Common myeloid progenitor, CD34-positive (primary cell): ENCODE measurements at regions of chr17 and their contacts with region 1.

Region 1: DNA sequence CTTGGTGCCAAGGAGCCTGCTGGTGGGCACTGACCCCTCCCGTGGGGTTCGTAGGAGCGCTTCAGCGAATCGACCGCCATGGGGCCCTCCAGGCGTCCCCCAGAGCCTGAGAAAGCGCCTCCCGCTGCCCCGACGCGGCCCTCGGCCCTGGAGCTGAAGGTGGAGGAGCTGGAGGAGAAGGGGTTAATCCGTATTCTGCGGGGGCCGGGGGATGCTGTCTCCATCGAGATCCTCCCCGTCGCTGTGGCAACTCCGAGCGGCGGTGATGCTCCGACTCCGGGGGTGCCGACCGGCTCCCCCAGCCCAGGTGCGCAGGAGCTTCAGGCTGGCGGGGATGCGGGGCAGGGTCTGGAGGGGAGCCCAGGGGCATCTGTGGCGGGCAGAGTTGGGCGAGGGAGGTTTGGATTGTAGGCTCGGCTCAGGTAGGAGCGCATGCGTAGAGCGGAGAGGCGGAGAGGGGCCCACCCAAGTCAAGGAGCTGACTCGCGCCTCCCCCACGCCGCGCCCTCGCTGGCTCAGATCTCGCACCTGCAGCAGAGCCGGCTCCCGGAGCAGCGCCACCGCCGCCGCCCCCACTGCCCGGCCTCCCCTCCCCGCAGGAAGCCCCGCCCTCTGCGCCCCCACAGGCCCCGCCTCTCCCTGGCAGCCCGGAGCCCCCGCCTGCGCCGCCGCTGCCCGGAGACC is 19.8 kb downstream of the FMNL1 start:
- DNase-seq: no peak
- H3K4me3 ChIP-seq: no peak overlapping the region
- H3K27ac ChIP-seq: no peak overlapping the region
- H3K4me1 ChIP-seq: peaks cover 0 to 7% (median 4%) of the 10 kb centered on the region in 4 experiments
- H3K27me3 ChIP-seq: no peaks in the 10 kb centered on the region

Region 2: GRCh38 chr17:45123930-45124796 is 117.3 kb before region 1 on chr17:
- CTCF ChIA-PET with region 1: no interaction called
- POLR2A ChIA-PET with region 1: no interaction called
- DNase-seq: peak; percentile 61 to 91 (median 86)
- H3K4me3 ChIP-seq: no peak overlapping the region
- H3K27ac ChIP-seq: peak overlapping the region in 1 of 2 experiments; percentile 7
- H3K4me1 ChIP-seq: peaks cover 0 to 12% (median 7%) of the 10 kb centered on the region in 4 experiments
- H3K27me3 ChIP-seq: peaks cover 0 to 29% (median 7%) of the 10 kb centered on the region in 5 experiments

Region 3: GRCh38 chr17:45172454-45173286 is 68.8 kb before region 1 on chr17:
- CTCF ChIA-PET with region 1: no interaction called
- POLR2A ChIA-PET with region 1: no interaction called
- DNase-seq: peak; percentile 36 to 73 (median 65)
- H3K4me3 ChIP-seq: peak overlapping the region; percentile 20 to 71 (median 56)
- H3K27ac ChIP-seq: peak overlapping the region in 1 of 2 experiments; percentile 25
- H3K4me1 ChIP-seq: peaks cover 0 to 44% (median 40%) of the 10 kb centered on the region in 4 experiments
- H3K27me3 ChIP-seq: no peaks in the 10 kb centered on the region

Region 4: DNA sequence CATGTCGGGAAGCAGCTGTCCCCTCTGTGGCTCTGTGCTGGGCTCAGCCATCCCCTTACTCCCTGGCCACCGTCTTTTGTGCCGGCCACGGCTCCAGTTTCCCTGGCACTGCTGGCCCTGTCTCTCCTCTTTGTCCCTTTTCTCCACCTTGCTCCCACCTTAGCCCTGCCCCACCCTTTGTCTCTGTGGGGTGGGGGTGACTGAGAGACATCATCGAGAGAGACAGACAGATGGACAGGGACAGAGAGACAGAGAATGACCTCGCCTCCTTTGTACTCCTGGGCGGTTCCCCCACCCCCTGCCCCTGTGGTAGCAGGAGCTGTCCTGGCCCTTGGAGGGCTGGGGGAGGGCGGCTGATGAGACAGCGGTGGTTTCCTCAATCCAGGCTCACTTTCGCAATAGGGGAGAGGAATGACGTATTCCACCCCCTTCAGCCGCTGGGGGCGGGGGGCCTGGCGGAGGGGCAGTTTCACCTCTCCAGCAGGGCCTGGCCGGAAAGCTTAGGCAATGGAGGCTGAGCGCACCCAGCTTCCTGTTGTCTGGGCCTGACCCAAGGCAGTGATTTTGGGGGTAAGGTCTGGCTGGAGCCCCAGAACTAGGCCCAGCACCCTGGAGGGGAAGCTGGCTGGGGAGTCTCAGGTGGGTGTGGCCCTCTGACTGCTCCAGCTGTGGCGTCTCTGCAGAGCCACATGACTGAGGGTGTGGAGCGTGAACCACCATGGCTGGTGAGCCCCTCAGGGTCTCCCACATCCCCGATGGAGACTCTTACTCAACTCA is 12.5 kb before region 1 on chr17:
- CTCF ChIA-PET with region 1: interaction called, 420 read pairs
- POLR2A ChIA-PET with region 1: interaction called, 3 read pairs
- DNase-seq: peak; percentile 88 to 94 (median 93)
- H3K4me3 ChIP-seq: peak overlapping the region in 6 of 7 experiments; percentile 31 to 92 (median 54)
- H3K27ac ChIP-seq: peak overlapping the region; percentile 87 to 96
- H3K4me1 ChIP-seq: peaks cover 17 to 94% (median 78%) of the 10 kb centered on the region in 4 experiments
- H3K27me3 ChIP-seq: no peaks in the 10 kb centered on the region